Activated naive CD8-positive, alpha-beta T cell treated with anti-CD3 and anti-CD28 coated beads, Interleukin-2, amount 10 ng/mL, durations not matched to agents 7 days and 5 days (primary cell): ENCODE measurements at regions of chr11 and their contacts with region 1.

Region 1: GRCh38 chr11:62805076-62805892 is at the start of gene NXF1:
- DNase-seq: peak; percentile 100
- ATAC-seq: peak; percentile 83
- H3K4me3 Mint-ChIP-seq: peak within 1 kb of the TSS; percentile 99
- H3K27ac Mint-ChIP-seq: peak within 1 kb of the TSS; percentile 99
- H3K4me1 Mint-ChIP-seq: peaks cover 33% of the 10 kb centered on the region
- H3K27me3 Mint-ChIP-seq: no peaks in the 10 kb centered on the region
- total RNA-seq, gene NXF1: 124 to 131 TPM

Region 2: DNA sequence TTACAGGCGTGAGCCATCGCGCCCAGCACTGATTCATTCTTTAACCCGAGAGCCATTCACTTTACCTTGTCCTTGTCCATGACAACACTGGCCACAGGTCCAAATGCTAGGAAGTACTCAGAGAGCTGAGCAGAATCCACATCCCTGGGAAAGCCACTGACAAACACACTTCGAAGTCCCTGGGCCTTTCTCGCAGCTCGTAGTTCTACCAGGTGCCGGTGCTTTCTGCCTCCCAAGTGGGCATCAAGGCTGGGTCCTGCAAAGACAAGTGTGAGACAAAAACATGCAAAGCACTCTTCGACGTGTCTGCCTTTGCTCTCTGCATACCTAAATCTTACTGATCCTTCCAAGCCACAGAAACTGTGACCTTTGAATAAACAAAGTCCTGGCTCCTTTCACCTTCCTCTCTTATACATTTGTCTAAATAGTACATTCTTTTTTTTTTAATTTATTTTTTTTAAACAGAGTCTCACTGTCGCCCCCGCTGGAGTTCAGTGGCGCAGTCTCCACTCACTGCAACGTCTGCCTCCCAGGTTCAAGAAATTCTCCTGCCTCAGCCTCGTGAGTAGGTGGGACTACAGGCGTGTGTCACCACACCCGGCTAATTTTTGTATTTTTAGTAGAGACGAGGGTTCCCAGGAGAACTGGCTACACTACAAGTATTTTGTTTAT is 216.2 kb before region 1 on chr11:
- POLR2A ChIA-PET with region 1: no interaction called
- DNase-seq: no peak
- ATAC-seq: no peak
- H3K4me3 Mint-ChIP-seq: peak overlapping the region; percentile 30
- H3K27ac Mint-ChIP-seq: no peak overlapping the region
- H3K4me1 Mint-ChIP-seq: peaks cover 30% of the 10 kb centered on the region
- H3K27me3 Mint-ChIP-seq: no peaks in the 10 kb centered on the region

Region 3: GRCh38 chr11:62816557-62816956 is 11.3 kb after region 1 on chr11:
- POLR2A ChIA-PET with region 1: interaction called, 10 read pairs
- DNase-seq: no peak
- ATAC-seq: no peak
- H3K4me3 Mint-ChIP-seq: no peak overlapping the region
- H3K27ac Mint-ChIP-seq: no peak overlapping the region
- H3K4me1 Mint-ChIP-seq: peaks cover 1% of the 10 kb centered on the region
- H3K27me3 Mint-ChIP-seq: no peaks in the 10 kb centered on the region

Region 4: DNA sequence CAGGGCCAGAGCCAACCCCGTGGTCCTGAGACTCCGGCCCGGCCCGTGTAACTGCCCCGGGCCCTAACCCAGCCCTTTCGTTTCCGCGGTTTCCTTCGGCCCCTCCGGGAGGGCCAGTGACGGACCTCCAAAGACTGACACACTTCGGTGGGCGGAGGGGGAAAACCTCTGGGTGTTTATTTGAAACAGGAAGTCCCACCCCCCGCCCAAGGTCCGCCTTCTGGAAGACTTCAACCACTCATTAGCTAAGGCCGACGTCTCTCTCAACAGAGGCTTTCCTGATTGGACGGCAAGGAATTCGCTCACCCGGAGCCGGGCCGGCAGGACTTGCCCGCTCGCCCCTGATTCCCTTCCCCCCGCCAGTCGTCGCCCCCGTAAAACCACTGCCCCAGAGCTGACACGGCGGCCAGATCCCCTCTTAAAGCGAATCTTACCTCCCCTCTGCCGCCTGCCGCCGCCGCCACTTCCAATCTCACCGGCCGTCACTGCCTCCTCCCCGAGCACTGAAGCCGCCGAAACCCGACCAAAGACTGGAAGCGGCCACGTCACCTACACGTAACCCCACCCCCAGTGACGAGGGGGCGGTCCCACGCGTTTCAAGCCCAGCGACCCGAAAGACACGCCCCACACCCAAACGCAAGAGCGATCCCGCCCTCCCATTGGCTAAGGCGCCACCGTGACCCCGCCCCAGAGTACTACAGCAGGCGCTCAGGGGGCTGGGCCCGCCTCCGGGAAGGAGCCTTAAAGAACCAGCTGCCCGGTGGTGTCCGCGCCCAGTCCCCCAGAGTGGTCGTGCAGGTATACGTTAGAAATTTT is 26.4 kb after region 1 on chr11 and contains the start of gene STX5:
- POLR2A ChIA-PET with region 1: interaction called, 15 read pairs
- DNase-seq: peak; percentile 99
- ATAC-seq: peak; percentile 91
- H3K4me3 Mint-ChIP-seq: peak within 1 kb of the TSS; percentile 99
- H3K27ac Mint-ChIP-seq: peak within 1 kb of the TSS; percentile 100
- H3K4me1 Mint-ChIP-seq: peaks cover 26% of the 10 kb centered on the region
- H3K27me3 Mint-ChIP-seq: no peaks in the 10 kb centered on the region
- total RNA-seq, gene STX5: 43.4 to 44.3 TPM